ENCODE measurements at regions of chr3 and their contacts with region 1.

Region 1: GRCh38 chr3:23981955-23982354 is 36.9 kb downstream of the NR1D2 start:
- DNase-seq: no peak
- CTCF ChIP-seq: no peak

Region 2: DNA sequence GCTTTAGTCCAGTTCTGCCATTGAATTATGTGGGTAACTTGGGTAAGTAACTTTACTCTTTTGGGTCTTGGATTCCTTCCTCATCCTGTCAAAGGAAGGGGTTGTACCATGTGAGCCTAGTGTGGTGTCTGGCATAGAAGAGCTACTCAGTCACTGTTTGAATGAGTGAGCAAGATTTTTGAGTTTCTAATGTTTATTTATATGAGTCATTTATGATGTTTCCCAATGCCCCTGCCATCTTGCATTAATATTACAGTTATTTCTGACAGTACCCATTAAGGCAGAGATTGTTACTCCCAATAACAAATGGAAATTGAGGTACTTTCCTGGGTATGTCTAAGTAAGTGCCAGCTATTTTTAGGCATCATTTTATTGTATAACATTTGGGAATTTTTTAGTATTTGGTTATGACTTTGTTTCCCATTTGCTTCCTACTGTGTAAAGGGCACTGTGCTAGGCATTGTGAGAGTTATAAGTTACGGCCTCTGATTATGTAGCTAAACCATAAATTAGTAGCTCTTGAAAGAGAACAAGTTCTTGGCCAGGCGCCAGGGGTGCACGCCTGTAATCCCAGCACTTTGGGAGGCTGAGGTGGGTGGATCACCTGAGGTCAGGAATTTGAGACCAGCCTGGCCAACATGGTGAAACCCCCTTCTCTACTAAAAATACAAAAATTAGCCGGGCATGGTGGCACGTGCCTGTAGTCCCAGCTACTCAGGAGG is 13.3 kb before region 1 on chr3:
- CTCF ChIA-PET with region 1: interaction called, 22 read pairs
- POLR2A ChIA-PET with region 1: no interaction called
- DNase-seq: no peak
- CTCF ChIP-seq: no peak

Region 3: GRCh38 chr3:23991683-23992628 is 10.0 kb after region 1 on chr3:
- CTCF ChIA-PET with region 1: interaction called, 20 read pairs
- POLR2A ChIA-PET with region 1: no interaction called
- DNase-seq: no peak
- CTCF ChIP-seq: no peak

Region 4: GRCh38 chr3:24177201-24177600 is 195.2 kb after region 1 on chr3:
- CTCF ChIA-PET with region 1: no interaction called
- POLR2A ChIA-PET with region 1: no interaction called
- DNase-seq: no peak
- CTCF ChIP-seq: no peak